Cardiac septum (tissue), 1 donor: ENCODE measurements at regions of chr12 and their contacts with region 1.

Region 1: GRCh38 chr12:119178544-119179325 is at the start of gene HSPB8:
- DNase-seq: peak; percentile 95
- total RNA-seq, gene HSPB8: 529 TPM

Region 2: GRCh38 chr12:118480235-118480634 is 698.5 kb before region 1 on chr12:
- intact Hi-C with region 1: no loop called
- DNase-seq: no peak

Region 3: DNA sequence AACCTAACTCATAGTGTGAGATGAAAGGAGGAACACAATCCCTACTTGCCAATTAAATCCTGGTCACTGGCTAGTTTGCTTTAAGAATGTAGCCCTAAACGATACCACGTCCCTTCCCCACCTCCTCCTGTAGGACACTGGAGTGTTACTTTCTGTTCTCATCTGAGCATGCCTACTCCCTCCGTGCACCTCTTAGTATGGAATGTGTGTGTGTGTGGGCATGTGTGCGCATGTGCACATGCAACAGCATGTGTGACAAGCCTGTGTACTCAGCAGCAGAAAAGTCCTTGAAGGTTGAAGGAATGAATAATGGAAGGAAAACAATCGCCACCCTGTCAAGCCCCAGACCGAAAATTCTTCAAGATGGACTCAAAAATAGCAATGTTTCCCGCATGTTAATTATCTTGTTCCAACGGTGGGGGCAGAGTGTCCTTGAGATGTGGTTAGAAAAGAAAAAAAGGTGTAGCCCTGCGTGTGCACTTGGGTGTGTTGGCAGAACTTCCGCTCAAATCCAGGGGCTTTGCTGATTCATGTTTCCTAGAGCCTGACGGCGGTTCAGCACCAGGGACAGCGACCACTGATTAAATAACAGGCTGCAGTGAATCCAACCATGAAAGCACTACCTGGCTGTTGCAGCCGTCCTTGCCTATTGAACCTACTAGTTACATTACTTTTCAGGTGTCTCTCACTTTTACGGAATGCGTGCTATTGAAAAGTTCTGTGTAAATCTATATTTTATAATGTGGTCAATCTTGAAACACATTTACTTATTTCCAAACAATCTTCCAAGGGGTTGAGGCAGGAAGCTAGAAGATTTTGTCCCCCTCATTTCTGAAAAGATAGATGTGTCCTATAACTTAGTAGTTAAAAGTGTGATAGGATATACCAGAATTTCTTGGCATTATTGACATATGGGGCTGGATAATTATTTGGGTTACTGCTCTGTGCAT is 117.6 kb before region 1 on chr12:
- intact Hi-C with region 1: no loop called
- DNase-seq: no peak

Region 4: DNA sequence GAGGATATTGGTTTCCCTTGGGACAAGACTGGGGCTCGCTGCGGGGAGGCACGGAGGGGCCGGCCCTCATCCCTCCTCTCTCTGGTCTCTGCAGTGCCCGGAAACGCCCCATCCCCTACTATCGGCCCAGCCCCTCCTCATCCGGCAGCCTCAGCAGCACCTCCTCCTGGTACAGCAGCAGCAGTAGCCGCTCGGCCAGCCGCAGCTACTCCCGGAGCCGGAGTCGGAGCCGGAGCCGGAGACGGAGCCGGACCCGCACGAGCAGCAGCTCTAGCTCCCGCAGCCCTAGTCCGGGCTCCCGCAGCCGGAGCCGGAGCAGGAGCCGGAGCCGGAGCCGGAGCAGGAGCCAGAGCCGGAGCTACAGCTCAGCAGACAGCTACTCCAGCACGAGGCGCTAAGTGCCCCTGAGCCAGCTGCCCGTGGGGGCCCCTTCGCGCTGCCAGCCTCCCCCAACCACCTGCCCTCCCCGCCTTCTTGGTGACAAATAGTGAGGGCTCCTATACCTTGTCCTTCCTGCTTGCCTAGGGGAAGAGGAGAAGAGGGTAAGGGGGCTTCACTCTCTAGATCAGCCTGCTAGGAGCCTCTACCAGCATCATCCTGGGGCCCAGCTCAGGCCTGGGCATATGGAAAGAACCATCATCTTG is 22.2 kb before region 1 on chr12:
- intact Hi-C with region 1: loop called (anchors 1 kb)
- DNase-seq: no peak